Right cardiac atrium (tissue), 5 donors: ENCODE measurements at regions of chr13 and their contacts with region 1.

Region 1: GRCh38 chr13:101916108-101916757 is 463.8 kb downstream of the ITGBL1 start:
- DNase-seq: peak; percentile 28 to 83 (median 74)
- ATAC-seq: peak; percentile 65 to 66
- H3K4me3 ChIP-seq: peak overlapping the region; percentile 41
- H3K27ac ChIP-seq: no peak overlapping the region
- H3K4me1 ChIP-seq: no peaks in the 10 kb centered on the region
- H3K27me3 ChIP-seq: no peaks in the 10 kb centered on the region

Region 2: GRCh38 chr13:101144808-101145419 is 771.3 kb before region 1 on chr13:
- intact Hi-C with region 1: loop called in 1 of 4 experiments (anchors 10 kb)
- DNase-seq: no peak
- ATAC-seq: no peak
- H3K4me3 ChIP-seq: no peak overlapping the region
- H3K27ac ChIP-seq: no peak overlapping the region
- H3K4me1 ChIP-seq: no peaks in the 10 kb centered on the region
- H3K27me3 ChIP-seq: no peaks in the 10 kb centered on the region

Region 3: DNA sequence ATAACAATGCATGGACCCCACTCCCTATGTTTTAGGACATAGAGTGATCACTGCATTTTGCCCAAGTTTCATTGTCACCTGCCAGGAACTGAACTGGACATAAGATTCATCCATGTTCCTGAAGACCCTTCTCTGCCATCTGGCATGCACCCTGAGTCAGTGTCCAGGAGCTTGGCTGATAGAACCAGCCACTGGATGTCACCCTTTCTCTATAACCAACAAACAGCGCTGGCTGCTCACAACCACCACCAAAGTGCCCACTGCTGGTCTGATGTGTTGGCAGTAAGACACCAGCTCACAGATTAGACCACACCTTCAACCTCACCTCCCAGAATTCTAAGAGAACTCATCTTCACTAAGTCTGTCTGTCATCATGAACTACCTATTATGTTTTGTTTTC is 130.4 kb before region 1 on chr13:
- intact Hi-C with region 1: loop called in 1 of 4 experiments (anchors 10 kb)
- DNase-seq: peak in 1 of 3 donors; percentile 44
- ATAC-seq: peak; percentile 61 to 68
- H3K4me3 ChIP-seq: no peak overlapping the region
- H3K27ac ChIP-seq: no peak overlapping the region
- H3K4me1 ChIP-seq: no peaks in the 10 kb centered on the region
- H3K27me3 ChIP-seq: no peaks in the 10 kb centered on the region

Region 4: GRCh38 chr13:102097708-102098107 is 181.5 kb after region 1 on chr13:
- intact Hi-C with region 1: no loop called
- DNase-seq: peak in 2 of 3 donors; percentile 49
- ATAC-seq: peak; percentile 75 to 81
- H3K4me3 ChIP-seq: no peak overlapping the region
- H3K27ac ChIP-seq: no peak overlapping the region
- H3K4me1 ChIP-seq: no peaks in the 10 kb centered on the region
- H3K27me3 ChIP-seq: no peaks in the 10 kb centered on the region